CD8-positive, alpha-beta T cell (primary cell): ENCODE measurements at regions of chr3 and their contacts with region 1.

Region 1: GRCh38 chr3:46098319-46098761 is 71.1 kb upstream of the XCR1 start:
- DNase-seq: peak in 8 of 9 experiments; percentile 19 to 70 (median 43)
- ATAC-seq: peak; percentile 75
- H3K4me3 ChIP-seq: no peak overlapping the region
- H3K4me3 Mint-ChIP-seq: peak overlapping the region; percentile 63
- H3K27ac ChIP-seq: peak overlapping the region; percentile 3 to 89
- H3K27ac Mint-ChIP-seq: peak overlapping the region; percentile 72
- H3K4me1 ChIP-seq: peaks cover 27% of the 10 kb centered on the region
- H3K4me1 Mint-ChIP-seq: peaks cover 48% of the 10 kb centered on the region
- H3K27me3 ChIP-seq: no peaks in the 10 kb centered on the region
- H3K27me3 Mint-ChIP-seq: no peaks in the 10 kb centered on the region
- CTCF ChIP-seq: no peak

Region 2: GRCh38 chr3:46208167-46208704 is 109.9 kb after region 1 on chr3 and contains the start of gene CCR1:
- CTCF ChIA-PET with region 1: interaction called, 3 read pairs
- POLR2A ChIA-PET with region 1: interaction called, 3 read pairs
- intact Hi-C with region 1: loop called in 1 of 2 experiments (anchors 5 kb)
- DNase-seq: peak in 4 of 9 experiments; percentile 26 to 77 (median 50)
- ATAC-seq: peak; percentile 45
- H3K4me3 ChIP-seq: peak within 1 kb of the TSS in 1 of 2 experiments; percentile 30
- H3K4me3 Mint-ChIP-seq: peak within 1 kb of the TSS; percentile 62
- H3K27ac ChIP-seq: peak within 1 kb of the TSS in 1 of 2 experiments; percentile 45
- H3K27ac Mint-ChIP-seq: peak within 1 kb of the TSS; percentile 80
- H3K4me1 ChIP-seq: peaks cover 21% of the 10 kb centered on the region
- H3K4me1 Mint-ChIP-seq: peaks cover 32% of the 10 kb centered on the region
- H3K27me3 ChIP-seq: no peaks in the 10 kb centered on the region
- H3K27me3 Mint-ChIP-seq: no peaks in the 10 kb centered on the region
- CTCF ChIP-seq: no peak
- total RNA-seq, gene CCR1: 0.86 to 1.2 TPM